ENCODE measurements at regions of chr18 and their contacts with region 1.

Region 1: DNA sequence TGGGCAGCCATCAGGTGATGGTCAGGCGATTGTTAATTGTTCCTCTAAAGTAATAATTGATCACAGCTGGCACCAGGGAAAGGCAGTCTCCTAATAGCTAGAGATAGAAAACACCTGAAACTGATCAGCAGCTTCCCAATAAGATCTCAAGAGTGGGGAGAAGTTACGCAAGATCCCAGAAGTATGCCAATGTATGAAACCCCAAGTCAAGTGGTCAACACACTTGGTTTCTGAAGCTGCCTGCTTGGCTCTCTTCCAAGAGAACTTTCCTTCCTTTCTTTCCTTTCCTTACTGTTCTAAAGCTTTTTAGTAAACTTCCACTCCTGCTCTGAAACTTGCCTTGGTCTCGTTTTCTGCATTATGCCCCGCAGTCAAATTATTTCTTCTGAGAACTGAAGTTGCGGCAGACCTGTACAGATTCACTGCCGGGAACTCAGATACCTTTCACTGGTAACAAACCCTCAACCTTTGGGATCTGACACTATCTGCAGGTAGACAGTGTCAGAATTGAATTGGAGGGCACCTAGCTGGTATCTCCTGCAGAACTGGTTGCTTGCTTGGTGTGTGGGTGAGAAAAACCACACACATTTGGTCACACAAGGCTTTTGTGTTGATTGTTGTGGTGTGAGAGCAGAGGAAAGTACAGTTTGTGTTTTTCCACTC is 201.7 kb upstream of the SKOR2 start:
- DNase-seq: no peak
- H3K4me3 ChIP-seq: no peak overlapping the region
- H3K27ac ChIP-seq: no peak overlapping the region
- H3K4me1 ChIP-seq: no peaks in the 10 kb centered on the region
- H3K27me3 ChIP-seq: no peaks in the 10 kb centered on the region
- CTCF ChIP-seq: no peak

Region 2: GRCh38 chr18:47506897-47507296 is 53.7 kb after region 1 on chr18:
- CTCF ChIA-PET with region 1: no interaction called
- dilution Hi-C with region 1: loop called (anchors 5 kb)
- in situ Hi-C with region 1: no loop called
- intact Hi-C with region 1: no loop called
- DNase-seq: no peak
- H3K4me3 ChIP-seq: no peak overlapping the region
- H3K27ac ChIP-seq: no peak overlapping the region
- H3K4me1 ChIP-seq: no peaks in the 10 kb centered on the region
- H3K27me3 ChIP-seq: no peaks in the 10 kb centered on the region
- CTCF ChIP-seq: no peak